ENCODE measurements at regions of chr12 and their contacts with region 1.

Region 1: GRCh38 chr12:105107494-105108371 is at the start of gene WASHC4:
- DNase-seq: peak; percentile 86 to 95 (median 93)
- ATAC-seq: peak; percentile 94
- H3K4me3 ChIP-seq: peak within 1 kb of the TSS; percentile 81 to 96
- H3K4me3 Mint-ChIP-seq: peak within 1 kb of the TSS; percentile 96
- H3K27ac ChIP-seq: peak within 1 kb of the TSS; percentile 91 to 92
- H3K27ac Mint-ChIP-seq: peak within 1 kb of the TSS; percentile 97
- H3K4me1 ChIP-seq: peaks cover 25% of the 10 kb centered on the region
- H3K4me1 Mint-ChIP-seq: peaks cover 37% of the 10 kb centered on the region
- H3K27me3 ChIP-seq: peaks cover 0 to 3% of the 10 kb centered on the region in 2 experiments
- H3K27me3 Mint-ChIP-seq: peaks cover 14% of the 10 kb centered on the region
- CTCF ChIP-seq: no peak
- total RNA-seq, gene WASHC4: 26.1 to 26.9 TPM

Region 2: DNA sequence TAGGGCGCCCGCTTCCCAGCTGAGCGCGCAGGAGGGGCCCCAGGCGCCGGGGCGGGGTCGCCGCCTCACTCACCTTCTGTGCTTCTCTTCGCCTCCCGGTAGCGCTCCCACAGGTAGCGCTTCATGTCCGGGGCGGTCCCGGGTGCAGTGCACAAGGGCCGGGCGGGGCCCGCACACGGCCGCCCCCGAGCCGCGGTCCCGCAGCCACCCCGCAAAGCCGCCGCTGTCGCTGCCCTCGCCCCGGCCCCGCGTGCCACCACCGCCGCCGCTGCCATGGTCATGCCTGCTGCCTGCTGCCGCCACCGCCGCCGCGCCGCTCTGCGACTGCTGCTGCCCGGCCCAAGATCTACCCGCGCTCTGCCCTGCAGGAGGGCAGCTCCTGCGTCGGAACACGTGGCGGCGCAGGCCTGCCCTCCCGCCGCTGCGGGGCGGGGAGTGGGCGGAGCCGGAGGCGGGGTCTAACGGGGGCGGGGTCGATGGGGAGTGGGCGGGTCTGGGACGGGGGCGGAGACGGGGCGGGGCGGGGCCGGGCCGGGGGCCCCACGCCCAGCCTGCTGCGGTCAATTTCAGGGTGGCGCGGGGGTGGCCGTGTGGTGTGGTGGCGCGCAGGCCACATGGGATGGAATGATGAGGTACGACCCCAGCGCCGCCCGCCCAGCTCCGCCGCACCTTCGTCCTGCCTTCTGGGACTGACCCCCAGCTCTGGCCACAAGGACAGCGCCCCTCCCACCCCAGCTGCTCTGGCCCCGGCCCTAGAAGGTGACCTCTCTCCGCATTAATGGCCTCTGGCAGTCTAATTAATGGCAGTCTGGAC is 1266.7 kb before region 1 on chr12 and contains the start of gene NT5DC3:
- CTCF ChIA-PET with region 1: no interaction called
- POLR2A ChIA-PET with region 1: no interaction called
- intact Hi-C with region 1: loop called (anchors 2 to 5 kb)
- DNase-seq: peak; percentile 66 to 91 (median 82)
- ATAC-seq: peak; percentile 93
- H3K4me3 ChIP-seq: peak within 1 kb of the TSS; percentile 64 to 68
- H3K4me3 Mint-ChIP-seq: peak within 1 kb of the TSS; percentile 85
- H3K27ac ChIP-seq: peak within 1 kb of the TSS; percentile 36 to 40
- H3K27ac Mint-ChIP-seq: peak within 1 kb of the TSS; percentile 74
- H3K4me1 ChIP-seq: peaks cover 11% of the 10 kb centered on the region
- H3K4me1 Mint-ChIP-seq: peaks cover 18% of the 10 kb centered on the region
- H3K27me3 ChIP-seq: no peaks in the 10 kb centered on the region
- H3K27me3 Mint-ChIP-seq: no peaks in the 10 kb centered on the region
- CTCF ChIP-seq: no peak
- total RNA-seq, gene NT5DC3: 4.3 to 5.6 TPM

Region 3: GRCh38 chr12:104064031-104064822 is 1043.5 kb before region 1 on chr12 and contains the start of gene HCFC2:
- CTCF ChIA-PET with region 1: no interaction called
- POLR2A ChIA-PET with region 1: no interaction called
- intact Hi-C with region 1: loop called in 1 of 2 experiments (anchors 2 kb)
- DNase-seq: peak; percentile 71 to 92 (median 87)
- ATAC-seq: peak; percentile 92
- H3K4me3 ChIP-seq: peak within 1 kb of the TSS; percentile 75 to 98
- H3K4me3 Mint-ChIP-seq: peak within 1 kb of the TSS; percentile 95
- H3K27ac ChIP-seq: peak within 1 kb of the TSS; percentile 61 to 64
- H3K27ac Mint-ChIP-seq: peak within 1 kb of the TSS; percentile 93
- H3K4me1 ChIP-seq: peaks cover 7% of the 10 kb centered on the region
- H3K4me1 Mint-ChIP-seq: peaks cover 29% of the 10 kb centered on the region
- H3K27me3 ChIP-seq: peaks cover 0 to 3% of the 10 kb centered on the region in 2 experiments
- H3K27me3 Mint-ChIP-seq: peaks cover 4% of the 10 kb centered on the region
- CTCF ChIP-seq: no peak
- total RNA-seq, gene HCFC2: 13.9 to 16.7 TPM

Region 4: DNA sequence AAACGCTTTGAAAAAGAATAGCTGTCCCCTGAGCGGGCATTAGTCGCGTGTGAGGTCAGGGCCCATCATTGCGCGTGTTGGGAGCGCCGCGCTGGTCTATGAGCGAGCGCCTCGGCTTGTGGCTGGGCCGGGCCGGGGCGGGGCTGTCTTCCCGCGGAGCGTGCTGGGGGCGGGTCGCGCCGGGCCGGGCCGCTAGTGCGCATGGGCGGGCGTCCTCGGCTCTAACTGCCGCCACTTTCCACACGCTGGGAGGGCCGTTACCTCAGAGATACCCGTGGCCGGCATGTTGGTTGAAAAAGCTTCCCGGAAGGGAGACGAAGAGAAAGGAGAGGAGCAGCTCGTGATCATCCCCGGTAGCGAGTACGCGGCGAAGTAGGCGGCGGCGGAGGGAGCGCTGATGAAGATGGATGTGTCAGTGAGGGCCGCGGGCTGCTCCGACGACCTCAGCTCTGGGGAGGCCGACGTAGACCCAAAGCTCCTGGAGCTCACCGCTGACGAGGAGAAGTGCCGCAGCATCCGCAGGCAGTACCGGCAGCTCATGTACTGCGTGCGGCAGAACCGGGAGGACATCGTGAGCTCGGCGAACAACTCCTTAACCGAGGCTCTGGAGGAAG is 804.1 kb before region 1 on chr12 and contains the start of gene EID3:
- CTCF ChIA-PET with region 1: no interaction called
- POLR2A ChIA-PET with region 1: no interaction called
- intact Hi-C with region 1: loop called in 1 of 2 experiments (anchors 5 kb)
- DNase-seq: peak; percentile 78 to 92 (median 91)
- ATAC-seq: peak; percentile 96
- H3K4me3 ChIP-seq: peak within 1 kb of the TSS; percentile 63 to 74
- H3K4me3 Mint-ChIP-seq: peak within 1 kb of the TSS; percentile 95
- H3K27ac ChIP-seq: peak within 1 kb of the TSS; percentile 60 to 80
- H3K27ac Mint-ChIP-seq: peak within 1 kb of the TSS; percentile 98
- H3K4me1 ChIP-seq: peaks cover 27% of the 10 kb centered on the region
- H3K4me1 Mint-ChIP-seq: peaks cover 62% of the 10 kb centered on the region
- H3K27me3 ChIP-seq: no peaks in the 10 kb centered on the region
- H3K27me3 Mint-ChIP-seq: no peaks in the 10 kb centered on the region
- CTCF ChIP-seq: no peak
- total RNA-seq, gene EID3: 11.7 to 13.0 TPM

Region 5: GRCh38 chr12:104958009-104958945 is 149.5 kb before region 1 on chr12 and contains the start of gene SLC41A2:
- CTCF ChIA-PET with region 1: no interaction called
- POLR2A ChIA-PET with region 1: no interaction called
- intact Hi-C with region 1: loop called (anchors 2 to 5 kb)
- DNase-seq: peak; percentile 52 to 90 (median 76)
- ATAC-seq: peak; percentile 90
- H3K4me3 ChIP-seq: peak within 1 kb of the TSS; percentile 61 to 97
- H3K4me3 Mint-ChIP-seq: peak within 1 kb of the TSS; percentile 94
- H3K27ac ChIP-seq: peak within 1 kb of the TSS; percentile 40 to 42
- H3K27ac Mint-ChIP-seq: peak within 1 kb of the TSS; percentile 85
- H3K4me1 ChIP-seq: peaks cover 13% of the 10 kb centered on the region
- H3K4me1 Mint-ChIP-seq: peaks cover 19% of the 10 kb centered on the region
- H3K27me3 ChIP-seq: no peaks in the 10 kb centered on the region
- H3K27me3 Mint-ChIP-seq: peaks cover 17% of the 10 kb centered on the region
- CTCF ChIP-seq: no peak
- total RNA-seq, gene SLC41A2: 3.4 to 4.2 TPM

Region 6: DNA sequence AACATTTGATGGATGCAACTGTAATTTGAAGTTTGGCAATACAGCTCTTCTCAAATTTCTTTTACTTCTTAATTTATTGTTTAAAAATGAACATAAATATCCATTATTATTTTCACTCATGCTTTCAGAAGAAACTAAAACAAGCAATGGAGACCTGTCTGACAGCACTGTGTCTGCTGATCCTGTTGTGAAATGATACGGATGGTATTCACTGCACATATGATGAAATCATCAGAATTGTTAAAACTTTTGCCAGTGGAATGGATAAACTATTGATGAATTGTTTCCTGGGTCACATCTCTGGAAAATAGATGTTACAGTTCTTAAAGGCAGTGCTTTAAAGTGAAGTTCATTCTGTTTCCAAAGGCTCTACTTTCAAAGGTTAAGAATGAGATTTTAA is 59.0 kb after region 1 on chr12:
- CTCF ChIA-PET with region 1: no interaction called
- POLR2A ChIA-PET with region 1: no interaction called
- intact Hi-C with region 1: no loop called
- DNase-seq: no peak
- ATAC-seq: no peak
- H3K4me3 ChIP-seq: no peak overlapping the region
- H3K4me3 Mint-ChIP-seq: no peak overlapping the region
- H3K27ac ChIP-seq: no peak overlapping the region
- H3K27ac Mint-ChIP-seq: peak overlapping the region; percentile 50
- H3K4me1 ChIP-seq: no peaks in the 10 kb centered on the region
- H3K4me1 Mint-ChIP-seq: no peaks in the 10 kb centered on the region
- H3K27me3 ChIP-seq: no peaks in the 10 kb centered on the region
- H3K27me3 Mint-ChIP-seq: no peaks in the 10 kb centered on the region
- CTCF ChIP-seq: no peak

Region 7: DNA sequence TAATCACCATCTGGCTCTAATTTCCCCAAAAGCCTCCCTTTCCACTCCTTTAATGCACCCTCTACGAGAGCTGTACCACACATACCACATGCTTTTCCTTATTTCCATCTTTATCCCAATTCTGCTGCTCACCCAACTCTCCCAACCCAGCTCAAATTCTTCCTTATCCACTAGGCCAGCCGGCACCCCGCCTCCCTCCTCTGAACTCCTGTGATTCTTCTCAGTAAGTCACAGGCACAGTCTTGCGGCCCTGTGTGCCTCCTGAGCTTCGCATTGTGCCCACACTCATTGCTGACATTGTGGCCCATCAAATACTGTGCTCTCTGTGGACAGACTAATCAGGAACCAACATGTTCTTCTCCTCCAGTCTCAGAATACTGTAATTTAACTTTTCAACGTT is 82.8 kb after region 1 on chr12:
- CTCF ChIA-PET with region 1: no interaction called
- POLR2A ChIA-PET with region 1: no interaction called
- intact Hi-C with region 1: no loop called
- DNase-seq: no peak
- ATAC-seq: no peak
- H3K4me3 ChIP-seq: no peak overlapping the region
- H3K4me3 Mint-ChIP-seq: no peak overlapping the region
- H3K27ac ChIP-seq: no peak overlapping the region
- H3K27ac Mint-ChIP-seq: peak overlapping the region; percentile 9
- H3K4me1 ChIP-seq: no peaks in the 10 kb centered on the region
- H3K4me1 Mint-ChIP-seq: no peaks in the 10 kb centered on the region
- H3K27me3 ChIP-seq: no peaks in the 10 kb centered on the region
- H3K27me3 Mint-ChIP-seq: no peaks in the 10 kb centered on the region
- CTCF ChIP-seq: no peak

Region 8: GRCh38 chr12:105330283-105330930 is 222.7 kb after region 1 on chr12 and contains the start of gene C12orf75:
- CTCF ChIA-PET with region 1: no interaction called
- POLR2A ChIA-PET with region 1: no interaction called
- intact Hi-C with region 1: loop called in 1 of 2 experiments (anchors 5 kb)
- DNase-seq: peak; percentile 52 to 93 (median 85)
- ATAC-seq: peak; percentile 80
- H3K4me3 ChIP-seq: peak within 1 kb of the TSS; percentile 62 to 70
- H3K4me3 Mint-ChIP-seq: peak within 1 kb of the TSS; percentile 90
- H3K27ac ChIP-seq: peak within 1 kb of the TSS; percentile 48 to 74
- H3K27ac Mint-ChIP-seq: peak within 1 kb of the TSS; percentile 87
- H3K4me1 ChIP-seq: peaks cover 26% of the 10 kb centered on the region
- H3K4me1 Mint-ChIP-seq: peaks cover 60% of the 10 kb centered on the region
- H3K27me3 ChIP-seq: no peaks in the 10 kb centered on the region
- H3K27me3 Mint-ChIP-seq: no peaks in the 10 kb centered on the region
- CTCF ChIP-seq: no peak
- total RNA-seq, gene C12orf75: 27.5 to 27.9 TPM

Region 9: DNA sequence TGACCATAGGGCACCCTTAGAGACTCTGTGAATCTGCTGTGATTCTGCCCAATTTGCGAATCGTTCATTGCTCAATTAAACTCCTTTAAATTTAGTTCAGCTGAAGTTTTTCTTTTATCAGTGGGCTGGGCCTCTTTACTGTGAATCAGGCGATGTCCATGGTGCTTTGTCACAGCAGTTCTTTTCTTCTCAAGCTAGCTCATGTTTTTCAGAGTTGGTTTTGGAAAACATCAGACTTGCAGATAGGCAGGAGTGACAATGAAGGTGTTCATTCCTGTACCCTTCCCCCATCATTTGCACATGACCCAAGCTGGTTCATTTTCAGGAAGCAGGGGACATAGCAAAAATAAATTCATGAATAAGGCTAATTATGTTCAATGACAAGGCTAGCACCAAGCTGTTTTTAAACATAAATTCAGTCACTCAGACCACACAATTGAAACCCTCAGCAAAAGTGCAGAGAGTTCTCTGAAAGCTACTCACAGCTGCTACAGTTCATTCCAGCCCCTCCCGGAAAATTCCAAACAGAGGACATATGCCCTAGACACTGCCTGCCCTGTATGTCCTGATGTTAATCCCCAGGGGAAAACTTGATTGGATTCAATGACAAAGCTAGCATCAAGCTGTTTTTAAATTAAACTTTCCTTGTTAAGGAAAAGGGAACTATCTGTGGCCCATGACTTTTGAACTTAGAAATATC is 606.0 kb after region 1 on chr12:
- CTCF ChIA-PET with region 1: no interaction called
- POLR2A ChIA-PET with region 1: no interaction called
- intact Hi-C with region 1: no loop called
- DNase-seq: no peak
- ATAC-seq: no peak
- H3K4me3 ChIP-seq: no peak overlapping the region
- H3K4me3 Mint-ChIP-seq: no peak overlapping the region
- H3K27ac ChIP-seq: no peak overlapping the region
- H3K27ac Mint-ChIP-seq: no peak overlapping the region
- H3K4me1 ChIP-seq: no peaks in the 10 kb centered on the region
- H3K4me1 Mint-ChIP-seq: no peaks in the 10 kb centered on the region
- H3K27me3 ChIP-seq: no peaks in the 10 kb centered on the region
- H3K27me3 Mint-ChIP-seq: no peaks in the 10 kb centered on the region
- CTCF ChIP-seq: no peak